ENCODE measurements at regions of chr1 and their contacts with region 1.

Region 1: DNA sequence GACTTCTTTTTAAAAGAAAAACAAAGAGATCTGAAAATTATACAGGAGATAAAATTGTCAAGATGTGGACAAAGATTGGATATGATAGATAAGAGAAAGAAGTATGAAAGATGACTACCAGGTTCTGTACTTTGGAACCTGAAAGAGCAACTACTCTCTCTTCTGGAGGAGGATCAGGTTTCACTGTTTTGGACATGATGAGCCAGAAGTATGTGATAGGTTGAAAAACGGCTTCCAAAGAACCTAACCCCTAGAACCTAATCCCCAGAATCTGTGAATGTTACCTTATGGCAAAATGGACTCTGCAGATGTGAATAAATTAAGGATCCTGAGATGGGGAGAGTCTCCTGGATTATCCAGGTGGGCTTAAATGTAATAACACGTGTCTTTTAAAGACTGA is 26.2 kb downstream of the RSBN1 start:
- DNase-seq: no peak
- ATAC-seq: no peak
- H3K4me3 ChIP-seq: no peak overlapping the region
- H3K27ac ChIP-seq: no peak overlapping the region
- H3K4me1 ChIP-seq: no peaks in the 10 kb centered on the region
- H3K27me3 ChIP-seq: no peaks in the 10 kb centered on the region
- CTCF ChIP-seq: no peak

Region 2: GRCh38 chr1:112637254-112638116 is 1148.6 kb before region 1 on chr1:
- CTCF ChIA-PET with region 1: no interaction called
- POLR2A ChIA-PET with region 1: interaction called, 11 read pairs
- in situ Hi-C with region 1: no loop called
- intact Hi-C with region 1: no loop called
- DNase-seq: no peak
- ATAC-seq: peak; percentile 90
- H3K4me3 ChIP-seq: no peak overlapping the region
- H3K27ac ChIP-seq: peak overlapping the region; percentile 87
- H3K4me1 ChIP-seq: peaks cover 45% of the 10 kb centered on the region
- H3K27me3 ChIP-seq: no peaks in the 10 kb centered on the region
- CTCF ChIP-seq: no peak

Region 3: DNA sequence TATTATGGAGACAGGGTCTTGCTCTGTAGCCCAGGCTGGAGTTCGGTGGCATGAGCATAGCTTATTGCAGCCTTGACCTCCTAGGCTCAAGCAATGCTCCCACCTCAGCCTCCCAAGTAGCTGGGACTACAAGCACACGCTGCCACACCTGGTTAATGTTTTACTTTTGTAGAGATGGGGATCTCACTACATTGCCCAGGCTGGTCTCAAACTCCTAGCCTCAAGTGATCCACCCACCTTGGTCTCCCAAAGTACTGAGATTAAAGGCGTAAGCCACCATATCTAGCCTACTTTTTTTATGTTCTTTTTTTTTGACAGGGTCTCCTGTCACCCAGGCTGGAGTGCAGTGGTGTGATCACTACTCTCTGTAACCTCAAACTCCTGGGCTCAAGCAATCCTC is 107.2 kb after region 1 on chr1:
- CTCF ChIA-PET with region 1: no interaction called
- POLR2A ChIA-PET with region 1: interaction called, 10 read pairs
- in situ Hi-C with region 1: no loop called
- intact Hi-C with region 1: no loop called
- DNase-seq: no peak
- ATAC-seq: no peak
- H3K4me3 ChIP-seq: no peak overlapping the region
- H3K27ac ChIP-seq: no peak overlapping the region
- H3K4me1 ChIP-seq: no peaks in the 10 kb centered on the region
- H3K27me3 ChIP-seq: no peaks in the 10 kb centered on the region
- CTCF ChIP-seq: no peak